ENCODE measurements at regions of chr6 and their contacts with region 1.

Region 1: DNA sequence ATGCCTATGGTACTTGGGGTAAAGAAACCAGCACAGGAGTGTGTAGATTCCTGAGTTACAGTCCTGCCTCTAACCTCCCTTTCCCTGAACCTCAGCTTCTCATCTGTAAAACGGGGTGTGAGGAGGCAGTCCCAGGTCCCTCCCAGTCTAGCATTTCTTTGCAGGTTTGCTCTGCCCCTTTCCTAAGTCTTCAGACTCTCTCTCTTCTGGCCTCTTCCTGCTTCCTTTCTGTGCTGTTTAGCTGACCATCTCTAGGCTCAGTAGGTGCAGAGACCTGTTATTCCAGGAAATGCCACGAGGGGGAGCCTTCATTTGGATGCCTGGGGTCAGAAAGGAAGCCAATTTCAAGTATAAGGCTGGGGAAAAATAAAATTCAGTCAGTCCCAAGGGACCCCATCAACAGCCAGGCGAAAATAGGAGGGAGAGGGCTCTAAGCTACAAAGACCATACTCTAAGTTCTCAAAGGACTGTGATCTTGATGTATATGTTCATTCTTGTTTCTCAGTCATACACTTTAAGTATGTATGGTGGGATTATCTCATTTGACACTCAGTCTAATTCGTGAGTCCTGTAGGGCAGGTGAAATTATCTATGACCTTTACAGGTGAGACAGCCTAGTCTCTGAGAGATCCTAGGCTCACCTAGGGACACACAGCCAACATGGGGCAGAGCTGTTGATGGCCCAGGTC is 89.1 kb downstream of the NCR2 start:
- DNase-seq: peak; percentile 61 to 96 (median 88)

Region 2: DNA sequence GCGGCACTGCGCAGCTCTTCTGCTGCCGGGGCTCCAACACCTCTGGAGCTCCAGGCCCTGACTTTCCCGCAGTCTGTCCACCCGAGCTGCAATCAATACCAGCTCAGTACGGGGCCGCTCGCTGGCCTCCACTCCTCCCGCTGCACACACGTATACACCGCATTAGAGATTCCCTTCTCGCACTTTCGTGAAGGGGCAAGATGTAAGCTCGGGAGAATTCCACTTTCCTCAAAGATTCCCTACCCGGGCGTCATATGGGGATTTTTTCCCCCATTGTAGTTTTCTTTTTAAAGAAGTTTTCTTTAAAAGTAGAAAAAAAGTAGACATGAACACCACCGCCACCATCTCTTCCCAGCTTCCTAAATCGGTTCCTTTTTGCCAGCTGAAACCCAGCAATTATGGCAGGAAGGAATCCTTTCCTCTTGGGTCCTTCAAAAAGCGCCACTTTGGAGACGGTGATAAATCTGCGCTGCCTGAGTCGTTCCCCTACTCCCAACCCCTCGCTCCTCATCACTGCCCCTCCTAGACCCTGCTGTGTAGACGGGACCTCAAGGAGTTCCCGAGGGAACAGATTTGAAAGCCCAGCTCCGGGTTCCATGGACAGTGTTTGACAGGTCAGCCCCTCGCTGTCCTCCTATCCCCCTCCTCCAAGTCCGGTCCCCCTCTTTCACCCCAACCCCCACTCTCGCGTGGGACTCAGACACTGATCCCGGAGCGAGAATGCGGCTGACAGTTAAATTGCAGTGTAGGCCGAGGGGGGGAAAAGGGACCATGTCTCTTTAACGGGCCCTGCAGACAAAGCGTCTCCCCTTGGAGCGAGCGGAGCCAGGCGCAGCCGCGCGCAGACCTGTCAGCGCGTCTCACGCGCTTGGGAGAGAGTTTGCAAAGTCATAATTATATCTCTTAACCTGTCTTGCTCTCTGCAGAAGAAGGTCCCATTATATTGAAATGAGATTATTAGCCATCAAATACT is 49.6 kb before region 1 on chr6:
- intact Hi-C with region 1: loop called (anchors 5 kb)
- DNase-seq: no peak

Measured in posterior cingulate gyrus (tissue), 11 donors.